ENCODE measurements at regions of chr10 and their contacts with region 1.

Region 1: DNA sequence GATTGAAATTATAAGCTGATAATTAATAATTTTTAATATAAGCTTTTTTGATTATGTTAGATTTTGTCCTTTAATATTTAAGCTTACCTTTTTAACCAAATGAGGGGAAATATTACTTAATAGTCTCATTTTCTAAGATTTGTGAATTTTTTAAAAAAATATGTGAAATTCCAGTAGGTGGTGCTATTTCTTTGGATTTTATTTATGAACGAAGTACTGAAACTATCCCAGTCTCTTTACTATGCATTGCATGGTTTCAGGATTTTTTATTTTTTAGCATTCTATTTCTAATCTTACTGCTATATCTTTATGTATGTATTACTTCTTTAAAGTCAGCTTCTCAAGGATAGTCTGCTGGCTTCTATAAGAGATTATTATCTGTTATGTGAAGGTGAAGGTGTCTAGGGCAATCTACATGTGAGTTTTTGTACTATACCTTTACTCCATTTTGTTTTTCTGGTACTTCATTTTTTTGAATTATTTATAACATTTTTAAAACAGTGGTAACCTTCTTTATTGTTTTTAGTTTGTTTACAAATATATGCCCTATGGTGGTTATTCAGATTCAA is 78.3 kb downstream of the ATRNL1 start:
- DNase-seq: no peak
- ATAC-seq: no peak
- H3K4me3 Mint-ChIP-seq: no peak overlapping the region
- H3K27ac Mint-ChIP-seq: no peak overlapping the region
- H3K4me1 Mint-ChIP-seq: no peaks in the 10 kb centered on the region
- H3K27me3 Mint-ChIP-seq: no peaks in the 10 kb centered on the region

Region 2: GRCh38 chr10:114499630-114500190 is 671.8 kb before region 1 on chr10:
- CTCF ChIA-PET with region 1: no interaction called
- POLR2A ChIA-PET with region 1: no interaction called
- intact Hi-C with region 1: no loop called
- DNase-seq: peak; percentile 89
- ATAC-seq: peak; percentile 54
- H3K4me3 Mint-ChIP-seq: peak overlapping the region; percentile 61
- H3K27ac Mint-ChIP-seq: peak overlapping the region; percentile 99
- H3K4me1 Mint-ChIP-seq: peaks cover 92% of the 10 kb centered on the region
- H3K27me3 Mint-ChIP-seq: no peaks in the 10 kb centered on the region

Region 3: DNA sequence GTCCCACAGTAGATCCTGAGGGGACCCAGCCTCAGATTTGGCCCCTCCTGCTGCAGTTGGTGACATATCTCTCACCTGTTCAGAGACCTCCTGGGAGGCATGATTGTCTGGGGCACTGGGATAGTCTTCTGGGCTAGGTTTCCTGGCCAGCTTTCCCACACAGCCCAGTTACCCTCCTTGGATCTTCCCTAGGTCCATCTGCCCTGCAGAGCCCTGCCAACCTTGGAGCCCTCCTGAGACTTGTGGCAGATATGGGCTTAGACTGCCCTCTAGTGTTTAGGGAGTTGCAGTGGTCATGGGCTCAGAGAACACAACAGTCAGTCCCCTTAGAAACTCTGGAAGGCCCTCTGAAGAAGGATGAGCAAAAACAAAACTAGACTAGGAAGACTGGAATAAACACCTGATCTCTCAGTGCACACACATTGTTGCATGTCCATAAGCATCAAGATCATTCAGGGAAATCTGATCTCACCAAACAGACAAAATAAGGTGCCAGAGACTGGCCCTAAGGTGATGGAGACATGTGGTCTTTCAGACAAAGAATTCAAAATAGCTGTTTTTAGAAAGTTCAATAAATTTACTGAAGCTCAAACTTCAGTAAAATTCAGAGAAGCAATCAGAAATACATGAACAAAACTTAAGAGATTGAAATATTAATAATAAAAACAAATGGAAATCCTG is 246.2 kb after region 1 on chr10:
- CTCF ChIA-PET with region 1: no interaction called
- POLR2A ChIA-PET with region 1: no interaction called
- intact Hi-C with region 1: loop called (anchors 5 to 10 kb)
- DNase-seq: peak; percentile 13
- ATAC-seq: peak; percentile 30
- H3K4me3 Mint-ChIP-seq: no peak overlapping the region
- H3K27ac Mint-ChIP-seq: no peak overlapping the region
- H3K4me1 Mint-ChIP-seq: no peaks in the 10 kb centered on the region
- H3K27me3 Mint-ChIP-seq: no peaks in the 10 kb centered on the region

Measured in activated CD4-positive, alpha-beta T cell treated with anti-CD3 and anti-CD28 coated beads for 36 hours (primary cell).